Posterior vena cava (tissue), 2 donors: ENCODE measurements at regions of chr6 and their contacts with region 1.

Region 1: DNA sequence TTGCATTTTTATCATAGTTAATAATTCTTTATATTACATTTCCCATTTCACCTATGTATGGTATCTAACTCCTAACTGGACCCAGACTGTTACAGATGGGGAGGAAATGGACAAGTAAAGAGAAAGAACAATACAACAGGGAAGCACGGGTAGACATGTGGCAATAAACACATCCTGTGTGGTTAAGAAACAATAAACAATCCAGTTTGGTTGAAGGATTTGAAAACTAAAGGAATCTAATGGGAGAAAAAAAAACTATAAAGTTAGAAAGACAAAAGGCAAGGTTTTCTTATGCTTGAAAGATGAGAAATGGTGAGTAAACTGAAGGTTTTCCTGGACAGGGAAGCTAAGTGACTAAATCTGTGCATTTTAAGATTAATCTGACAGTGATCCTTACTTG is 34.9 kb upstream of the ALDH8A1 start:
- DNase-seq: no peak

Region 2: DNA sequence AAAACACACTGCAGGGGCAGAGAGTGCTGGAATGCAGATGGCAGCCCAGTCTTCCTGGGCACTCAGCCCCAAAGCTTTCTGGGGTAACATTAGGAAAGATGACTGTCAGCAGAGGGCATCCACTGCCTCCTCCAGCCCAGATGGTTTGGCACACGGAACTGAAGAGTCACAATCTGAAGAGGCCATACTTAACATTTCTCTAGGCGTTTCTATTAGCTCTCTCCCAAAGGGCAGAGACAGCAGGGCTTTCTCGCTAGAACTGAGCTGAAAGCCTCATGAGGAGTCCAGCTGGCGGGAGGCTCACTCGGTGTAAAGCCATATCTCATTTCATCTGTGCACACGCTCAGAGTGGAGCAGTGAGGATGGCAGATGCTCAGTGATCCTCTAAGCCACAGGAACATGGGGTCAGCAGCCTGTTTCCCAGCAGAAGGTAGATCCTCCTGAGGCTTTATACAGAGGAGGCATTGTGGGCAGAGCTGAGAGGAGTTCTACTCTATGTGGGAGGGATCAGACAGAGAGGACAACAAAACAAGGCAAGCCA is 63.0 kb before region 1 on chr6:
- intact Hi-C with region 1: no loop called
- DNase-seq: no peak

Region 3: GRCh38 chr6:134995536-134995935 is 10.7 kb after region 1 on chr6:
- intact Hi-C with region 1: no loop called
- DNase-seq: no peak

Region 4: DNA sequence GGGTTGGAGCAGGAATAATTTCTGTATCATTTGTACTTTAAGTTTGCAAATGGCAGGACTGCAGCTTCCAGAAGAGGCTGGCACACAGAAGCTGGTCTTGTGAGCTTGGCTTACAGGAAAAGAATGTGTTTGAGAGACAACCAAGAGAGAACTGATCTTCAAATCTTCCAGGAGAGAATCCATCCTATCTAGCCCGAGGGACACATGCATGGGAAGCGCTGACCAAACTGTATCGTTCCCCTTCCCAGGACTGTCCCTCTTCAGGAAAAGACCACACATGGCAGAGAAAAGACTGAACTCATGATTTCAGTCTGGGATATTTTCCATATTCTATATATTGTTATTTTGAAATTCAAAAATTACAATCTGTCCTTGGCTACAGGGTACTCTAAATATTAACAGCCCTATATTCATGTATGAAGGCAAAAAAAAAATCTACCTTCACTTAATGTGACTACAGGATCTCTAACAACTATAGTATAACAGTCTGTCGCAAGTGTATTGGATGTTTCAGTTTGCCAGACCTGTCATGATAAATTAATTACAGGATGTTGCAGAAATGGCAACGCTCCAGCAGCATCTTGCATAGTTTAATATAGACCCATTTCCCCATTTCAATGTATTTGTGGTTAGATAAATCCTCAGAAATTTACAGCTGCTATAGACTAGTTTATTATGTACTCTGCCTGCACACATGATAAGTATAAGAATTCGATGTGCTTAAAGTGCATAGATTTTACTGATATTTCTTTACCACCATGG is 295.7 kb after region 1 on chr6:
- intact Hi-C with region 1: no loop called
- DNase-seq: no peak

Region 5: DNA sequence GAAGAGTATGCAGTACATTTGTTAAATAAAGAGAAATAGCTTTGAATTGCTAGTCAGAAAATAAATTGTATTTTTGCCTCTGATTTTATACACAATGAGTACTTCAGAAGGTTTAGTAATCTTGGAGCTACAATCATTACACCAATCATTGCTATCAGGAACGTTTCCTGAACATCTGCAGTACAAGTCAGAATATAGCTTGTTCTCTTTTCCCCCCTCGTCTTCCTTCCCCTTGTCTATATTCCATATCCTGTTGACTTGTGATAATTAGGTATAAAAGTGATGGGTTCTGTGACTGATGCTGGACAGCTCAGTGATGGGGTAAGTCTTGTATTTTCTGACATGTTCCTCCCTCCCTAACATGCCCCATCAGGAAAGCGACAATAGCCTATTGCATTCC is 418.8 kb after region 1 on chr6:
- intact Hi-C with region 1: loop called in 1 of 2 experiments (anchors 10 kb)
- DNase-seq: no peak